ENCODE measurements at regions of chr11 and their contacts with region 1.

Region 1: DNA sequence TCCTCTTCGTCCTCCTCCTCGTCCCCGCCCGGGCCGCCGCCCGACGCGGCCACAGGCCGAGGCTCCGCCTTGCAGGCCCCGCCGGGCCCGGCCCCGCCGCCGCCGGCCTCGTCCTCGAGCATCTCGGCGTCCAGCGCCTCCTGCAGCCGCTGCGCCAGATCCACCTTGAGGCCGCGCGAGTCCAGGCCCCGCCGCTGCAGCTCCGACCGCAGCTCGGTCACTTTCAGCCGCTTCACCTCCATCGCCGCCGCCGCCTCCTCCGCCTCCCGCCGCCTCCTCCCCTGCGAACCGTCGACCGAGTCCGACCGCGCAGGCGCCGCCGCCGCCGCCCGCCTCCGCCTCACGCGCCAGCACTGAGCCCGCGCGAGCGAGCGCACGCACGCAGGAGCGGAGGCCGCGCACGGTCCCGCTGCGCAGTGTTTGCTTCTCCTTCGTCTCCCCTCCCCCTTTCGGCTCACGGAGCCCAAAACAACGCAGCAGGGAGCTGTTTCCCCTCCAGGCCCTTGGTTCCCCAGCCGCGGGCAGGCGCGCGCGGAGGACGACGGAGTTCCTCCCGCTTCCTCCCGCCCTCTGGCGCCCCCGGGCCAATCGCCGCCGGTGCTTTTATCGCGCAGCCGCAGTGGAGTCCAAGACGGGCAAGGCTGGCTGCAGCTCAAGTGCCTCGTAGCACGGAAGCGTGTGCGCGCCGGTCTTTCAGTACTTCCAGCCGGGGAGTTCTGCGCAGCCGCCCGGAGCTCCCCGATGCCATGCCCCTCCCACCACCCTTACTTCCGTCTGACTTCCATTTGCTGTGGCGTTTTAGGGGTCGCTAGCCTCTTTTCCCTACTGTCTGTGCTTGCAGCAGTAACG is at the start of gene HNRNPUL2:
- DNase-seq: peak; percentile 96 to 100 (median 99)
- ATAC-seq: peak; percentile 89
- H3K4me3 ChIP-seq: peak within 1 kb of the TSS; percentile 87
- H3K4me3 Mint-ChIP-seq: peak within 1 kb of the TSS; percentile 91 to 99 (median 96)
- H3K27ac ChIP-seq: peak within 1 kb of the TSS; percentile 92
- H3K27ac Mint-ChIP-seq: peak within 1 kb of the TSS; percentile 95 to 100 (median 98)
- H3K4me1 ChIP-seq: peaks cover 36 to 38% of the 10 kb centered on the region in 2 donors
- H3K4me1 Mint-ChIP-seq: peaks cover 23 to 65% (median 58%) of the 10 kb centered on the region in 7 donors
- H3K27me3 ChIP-seq: no peaks in the 10 kb centered on the region
- H3K27me3 Mint-ChIP-seq: peaks cover 0 to 2% (median 0%) of the 10 kb centered on the region in 5 donors
- total RNA-seq, gene HNRNPUL2: 43.4 to 77.5 (median 65.3) TPM

Region 2: DNA sequence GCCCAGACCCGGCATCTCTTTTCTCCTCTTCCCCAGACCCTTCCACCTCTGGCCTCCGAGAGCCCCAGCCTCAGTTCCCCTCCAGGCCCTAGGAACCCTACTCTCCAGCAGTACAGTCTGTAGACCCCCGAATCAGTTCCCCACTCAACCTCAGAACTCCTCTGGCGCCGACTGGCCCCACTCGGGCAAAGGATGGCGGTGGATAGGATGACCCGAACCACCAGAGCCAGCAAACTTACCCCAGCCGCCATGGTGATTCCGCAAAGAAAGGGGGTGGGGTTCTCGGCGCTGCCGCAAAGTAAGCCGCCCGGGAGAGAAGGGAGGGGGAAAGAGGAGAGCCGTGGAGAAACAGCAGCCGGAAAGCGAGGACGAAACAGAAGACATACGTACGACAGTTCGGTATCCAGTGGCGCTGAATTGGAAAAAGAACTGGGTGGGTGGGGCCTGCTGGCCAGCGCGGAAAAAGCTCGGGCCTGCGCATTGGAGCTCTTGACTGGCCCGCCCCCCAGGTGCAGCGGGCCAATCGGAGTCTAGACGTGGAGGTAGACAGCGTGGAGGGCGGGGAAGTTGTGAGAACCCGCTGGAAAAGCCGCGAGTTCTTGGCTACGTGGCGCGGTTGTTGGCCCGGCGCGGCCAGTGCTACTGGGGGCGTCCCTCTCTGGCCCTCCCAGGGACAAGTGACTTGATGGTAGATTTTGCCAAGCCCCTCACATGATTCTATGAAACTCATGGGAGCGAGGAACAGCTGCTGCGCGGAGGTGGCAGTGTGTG is 153.4 kb before region 1 on chr11 and contains the start of gene EEF1G:
- CTCF ChIA-PET with region 1: interaction called, 3 read pairs
- POLR2A ChIA-PET with region 1: interaction called, 4 read pairs
- intact Hi-C with region 1: loop called (anchors 1 kb)
- DNase-seq: peak; percentile 88 to 100 (median 99)
- ATAC-seq: peak; percentile 96
- H3K4me3 ChIP-seq: peak within 1 kb of the TSS; percentile 82
- H3K4me3 Mint-ChIP-seq: peak within 1 kb of the TSS; percentile 94 to 100 (median 97)
- H3K27ac ChIP-seq: peak within 1 kb of the TSS; percentile 88
- H3K27ac Mint-ChIP-seq: peak within 1 kb of the TSS; percentile 81 to 98 (median 95)
- H3K4me1 ChIP-seq: peaks cover 8 to 11% of the 10 kb centered on the region in 2 donors
- H3K4me1 Mint-ChIP-seq: peaks cover 39 to 61% (median 45%) of the 10 kb centered on the region in 7 donors
- H3K27me3 ChIP-seq: no peaks in the 10 kb centered on the region
- H3K27me3 Mint-ChIP-seq: no peaks in the 10 kb centered on the region
- total RNA-seq, gene EEF1G: 1,186 to 2,550 (median 2,338) TPM

Region 3: GRCh38 chr11:62671575-62672389 is 55.4 kb before region 1 on chr11 and contains the starts of genes LBHD1 and UQCC3:
- CTCF ChIA-PET with region 1: no interaction called
- POLR2A ChIA-PET with region 1: interaction called, 31 read pairs
- intact Hi-C with region 1: no loop called
- DNase-seq: peak; percentile 49 to 80 (median 73)
- ATAC-seq: peak; percentile 85
- H3K4me3 ChIP-seq: peak within 1 kb of the TSS; percentile 62
- H3K4me3 Mint-ChIP-seq: peak within 1 kb of the TSS; percentile 94 to 100 (median 99)
- H3K27ac ChIP-seq: peak within 1 kb of the TSS; percentile 90
- H3K27ac Mint-ChIP-seq: peak within 1 kb of the TSS; percentile 91 to 97 (median 96)
- H3K4me1 ChIP-seq: peaks cover 12 to 25% of the 10 kb centered on the region in 2 donors
- H3K4me1 Mint-ChIP-seq: peaks cover 12 to 62% (median 51%) of the 10 kb centered on the region in 7 donors
- H3K27me3 ChIP-seq: no peaks in the 10 kb centered on the region
- H3K27me3 Mint-ChIP-seq: no peaks in the 10 kb centered on the region
- total RNA-seq, gene LBHD1: 13.8 to 26.4 (median 20.8) TPM
- total RNA-seq, gene UQCC3: 2.2 to 8.2 (median 5.8) TPM

Region 4: GRCh38 chr11:62753736-62754603 is 26.8 kb after region 1 on chr11 and contains the start of gene ZBTB3:
- CTCF ChIA-PET with region 1: interaction called, 8 read pairs
- POLR2A ChIA-PET with region 1: interaction called, 195 read pairs
- intact Hi-C with region 1: loop called (anchors 1 kb)
- DNase-seq: peak; percentile 89 to 99 (median 98)
- ATAC-seq: peak; percentile 96
- H3K4me3 ChIP-seq: peak within 1 kb of the TSS; percentile 94
- H3K4me3 Mint-ChIP-seq: peak within 1 kb of the TSS; percentile 86 to 100 (median 98)
- H3K27ac ChIP-seq: peak within 1 kb of the TSS; percentile 83
- H3K27ac Mint-ChIP-seq: peak within 1 kb of the TSS; percentile 93 to 99 (median 95)
- H3K4me1 ChIP-seq: peaks cover 15 to 16% of the 10 kb centered on the region in 2 donors
- H3K4me1 Mint-ChIP-seq: peaks cover 9 to 41% (median 29%) of the 10 kb centered on the region in 7 donors
- H3K27me3 ChIP-seq: no peaks in the 10 kb centered on the region
- H3K27me3 Mint-ChIP-seq: no peaks in the 10 kb centered on the region
- total RNA-seq, gene ZBTB3: 6.4 to 24.1 (median 19.0) TPM

Region 5: GRCh38 chr11:62787005-62787759 is 60.0 kb after region 1 on chr11 and contains the start of gene TMEM179B:
- CTCF ChIA-PET with region 1: interaction called, 17 read pairs
- POLR2A ChIA-PET with region 1: interaction called, 41 read pairs
- intact Hi-C with region 1: loop called (anchors 1 kb)
- DNase-seq: peak; percentile 87 to 98 (median 95)
- ATAC-seq: peak; percentile 83
- H3K4me3 ChIP-seq: peak within 1 kb of the TSS; percentile 82
- H3K4me3 Mint-ChIP-seq: peak within 1 kb of the TSS; percentile 93 to 97 (median 96)
- H3K27ac ChIP-seq: peak within 1 kb of the TSS; percentile 93
- H3K27ac Mint-ChIP-seq: peak within 1 kb of the TSS; percentile 91 to 99 (median 96)
- H3K4me1 ChIP-seq: peaks cover 32 to 38% of the 10 kb centered on the region in 2 donors
- H3K4me1 Mint-ChIP-seq: peaks cover 22 to 59% (median 42%) of the 10 kb centered on the region in 7 donors
- H3K27me3 ChIP-seq: no peaks in the 10 kb centered on the region
- H3K27me3 Mint-ChIP-seq: no peaks in the 10 kb centered on the region
- total RNA-seq, gene TMEM179B: 23.2 to 72.3 (median 50.9) TPM

Region 6: DNA sequence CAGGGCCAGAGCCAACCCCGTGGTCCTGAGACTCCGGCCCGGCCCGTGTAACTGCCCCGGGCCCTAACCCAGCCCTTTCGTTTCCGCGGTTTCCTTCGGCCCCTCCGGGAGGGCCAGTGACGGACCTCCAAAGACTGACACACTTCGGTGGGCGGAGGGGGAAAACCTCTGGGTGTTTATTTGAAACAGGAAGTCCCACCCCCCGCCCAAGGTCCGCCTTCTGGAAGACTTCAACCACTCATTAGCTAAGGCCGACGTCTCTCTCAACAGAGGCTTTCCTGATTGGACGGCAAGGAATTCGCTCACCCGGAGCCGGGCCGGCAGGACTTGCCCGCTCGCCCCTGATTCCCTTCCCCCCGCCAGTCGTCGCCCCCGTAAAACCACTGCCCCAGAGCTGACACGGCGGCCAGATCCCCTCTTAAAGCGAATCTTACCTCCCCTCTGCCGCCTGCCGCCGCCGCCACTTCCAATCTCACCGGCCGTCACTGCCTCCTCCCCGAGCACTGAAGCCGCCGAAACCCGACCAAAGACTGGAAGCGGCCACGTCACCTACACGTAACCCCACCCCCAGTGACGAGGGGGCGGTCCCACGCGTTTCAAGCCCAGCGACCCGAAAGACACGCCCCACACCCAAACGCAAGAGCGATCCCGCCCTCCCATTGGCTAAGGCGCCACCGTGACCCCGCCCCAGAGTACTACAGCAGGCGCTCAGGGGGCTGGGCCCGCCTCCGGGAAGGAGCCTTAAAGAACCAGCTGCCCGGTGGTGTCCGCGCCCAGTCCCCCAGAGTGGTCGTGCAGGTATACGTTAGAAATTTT is 104.6 kb after region 1 on chr11 and contains the start of gene STX5:
- CTCF ChIA-PET with region 1: no interaction called
- POLR2A ChIA-PET with region 1: interaction called, 23 read pairs
- intact Hi-C with region 1: loop called (anchors 1 kb)
- DNase-seq: peak; percentile 96 to 100 (median 99)
- ATAC-seq: peak; percentile 98
- H3K4me3 ChIP-seq: peak within 1 kb of the TSS; percentile 95
- H3K4me3 Mint-ChIP-seq: peak within 1 kb of the TSS; percentile 87 to 99 (median 96)
- H3K27ac ChIP-seq: peak within 1 kb of the TSS; percentile 99
- H3K27ac Mint-ChIP-seq: peak within 1 kb of the TSS; percentile 93 to 100 (median 99)
- H3K4me1 ChIP-seq: peaks cover 16% of the 10 kb centered on the region in 2 donors
- H3K4me1 Mint-ChIP-seq: peaks cover 15 to 57% (median 45%) of the 10 kb centered on the region in 7 donors
- H3K27me3 ChIP-seq: no peaks in the 10 kb centered on the region
- H3K27me3 Mint-ChIP-seq: no peaks in the 10 kb centered on the region
- total RNA-seq, gene STX5: 47.0 to 152 (median 57.3) TPM

Region 7: GRCh38 chr11:62896049-62896448 is 168.9 kb after region 1 on chr11:
- CTCF ChIA-PET with region 1: no interaction called
- POLR2A ChIA-PET with region 1: no interaction called
- intact Hi-C with region 1: no loop called
- DNase-seq: no peak
- ATAC-seq: no peak
- H3K4me3 ChIP-seq: no peak overlapping the region
- H3K4me3 Mint-ChIP-seq: no peak overlapping the region
- H3K27ac ChIP-seq: no peak overlapping the region
- H3K27ac Mint-ChIP-seq: no peak overlapping the region
- H3K4me1 ChIP-seq: no peaks in the 10 kb centered on the region
- H3K4me1 Mint-ChIP-seq: peaks cover 0 to 4% (median 0%) of the 10 kb centered on the region in 7 donors
- H3K27me3 ChIP-seq: no peaks in the 10 kb centered on the region
- H3K27me3 Mint-ChIP-seq: peaks cover 0 to 16% (median 7%) of the 10 kb centered on the region in 5 donors